ENCODE measurements at regions of chr1 and their contacts with region 1.

Region 1: GRCh38 chr1:99645699-99646531 is at the start of gene PALMD:
- DNase-seq: peak; percentile 81
- H3K4me3 ChIP-seq: peak within 1 kb of the TSS; percentile 47 to 62 (median 53)
- H3K27ac ChIP-seq: peak within 1 kb of the TSS; percentile 87
- H3K4me1 ChIP-seq: peaks cover 48% of the 10 kb centered on the region
- H3K27me3 ChIP-seq: no peaks in the 10 kb centered on the region
- CTCF ChIP-seq: no peak
- total RNA-seq, gene PALMD: 2.7 to 36.7 TPM

Region 2: GRCh38 chr1:99557546-99558202 is 88.2 kb before region 1 on chr1:
- CTCF ChIA-PET with region 1: no interaction called
- dilution Hi-C with region 1: no loop called
- in situ Hi-C with region 1: no loop called
- intact Hi-C with region 1: loop called (anchors 5 kb)
- DNase-seq: peak; percentile 81
- H3K4me3 ChIP-seq: no peak overlapping the region
- H3K27ac ChIP-seq: peak overlapping the region; percentile 49
- H3K4me1 ChIP-seq: peaks cover 24% of the 10 kb centered on the region
- H3K27me3 ChIP-seq: no peaks in the 10 kb centered on the region
- CTCF ChIP-seq: no peak

Region 3: DNA sequence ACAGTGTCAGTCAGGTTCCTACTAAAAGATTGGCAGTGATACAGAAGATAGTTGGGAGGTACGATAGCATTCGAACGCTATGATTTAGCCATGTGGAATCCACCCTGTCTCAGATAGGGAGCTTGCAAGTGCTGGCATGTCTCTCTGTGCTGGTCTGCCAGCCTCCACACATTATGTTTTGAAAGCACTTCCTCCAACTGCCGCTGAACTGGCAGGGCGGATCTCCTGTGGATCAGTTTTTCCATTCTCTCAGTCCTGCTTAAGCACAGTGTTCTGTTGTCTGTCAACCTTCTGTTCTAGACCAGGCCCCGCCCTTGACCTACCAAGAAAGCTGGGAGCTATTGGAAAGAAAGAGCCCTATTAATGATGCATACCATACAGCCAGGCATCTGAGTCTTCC is 65.5 kb before region 1 on chr1:
- CTCF ChIA-PET with region 1: no interaction called
- dilution Hi-C with region 1: no loop called
- in situ Hi-C with region 1: no loop called
- intact Hi-C with region 1: loop called (anchors 5 kb)
- DNase-seq: peak; percentile 97
- H3K4me3 ChIP-seq: no peak overlapping the region
- H3K27ac ChIP-seq: peak overlapping the region; percentile 84
- H3K4me1 ChIP-seq: peaks cover 20% of the 10 kb centered on the region
- H3K27me3 ChIP-seq: no peaks in the 10 kb centered on the region
- CTCF ChIP-seq: peak; percentile 31 to 44

Region 4: DNA sequence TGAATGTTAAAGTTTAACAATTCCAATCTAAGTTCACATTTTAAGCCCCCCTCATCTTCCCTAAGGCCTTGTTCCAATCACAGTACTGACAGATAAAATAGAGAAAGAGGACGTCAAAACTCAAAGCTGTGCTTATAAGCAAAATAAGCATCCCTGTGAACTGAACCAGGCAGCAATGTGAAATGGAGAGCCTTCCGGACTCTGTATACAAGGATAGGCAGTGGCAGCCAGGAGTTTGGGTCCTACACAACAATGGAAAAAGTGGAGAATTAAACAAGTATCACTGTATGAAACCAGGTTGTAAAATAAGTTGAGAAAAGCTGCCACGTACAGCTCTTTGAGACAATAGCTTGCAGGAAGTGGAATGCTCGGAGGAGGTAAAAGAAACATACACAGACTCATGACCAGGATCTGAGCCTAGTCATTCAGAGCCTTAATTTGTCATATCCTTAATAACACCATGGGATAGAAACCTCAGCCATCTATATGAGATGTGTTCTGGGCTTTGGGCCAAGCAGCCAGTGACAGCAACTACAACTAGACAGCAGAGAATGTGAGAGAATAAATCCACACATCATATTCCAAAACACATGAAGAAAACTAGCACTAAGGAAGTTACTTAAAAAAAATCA is 55.2 kb before region 1 on chr1:
- CTCF ChIA-PET with region 1: no interaction called
- dilution Hi-C with region 1: no loop called
- in situ Hi-C with region 1: no loop called
- intact Hi-C with region 1: no loop called
- DNase-seq: peak; percentile 91
- H3K4me3 ChIP-seq: no peak overlapping the region
- H3K27ac ChIP-seq: peak overlapping the region; percentile 55
- H3K4me1 ChIP-seq: peaks cover 14% of the 10 kb centered on the region
- H3K27me3 ChIP-seq: no peaks in the 10 kb centered on the region
- CTCF ChIP-seq: no peak

Region 5: GRCh38 chr1:99659755-99660210 is 13.9 kb after region 1 on chr1:
- CTCF ChIA-PET with region 1: no interaction called
- dilution Hi-C with region 1: no loop called
- in situ Hi-C with region 1: no loop called
- intact Hi-C with region 1: loop called (anchors 2 kb)
- DNase-seq: peak; percentile 98
- H3K4me3 ChIP-seq: no peak overlapping the region
- H3K27ac ChIP-seq: peak overlapping the region; percentile 95
- H3K4me1 ChIP-seq: peaks cover 37% of the 10 kb centered on the region
- H3K27me3 ChIP-seq: no peaks in the 10 kb centered on the region
- CTCF ChIP-seq: no peak

Region 6: GRCh38 chr1:99685516-99686180 is 39.7 kb after region 1 on chr1:
- CTCF ChIA-PET with region 1: interaction called, 6 read pairs
- dilution Hi-C with region 1: no loop called
- in situ Hi-C with region 1: no loop called
- intact Hi-C with region 1: loop called (anchors 2 kb)
- DNase-seq: peak; percentile 73
- H3K4me3 ChIP-seq: no peak overlapping the region
- H3K27ac ChIP-seq: no peak overlapping the region
- H3K4me1 ChIP-seq: peaks cover 6% of the 10 kb centered on the region
- H3K27me3 ChIP-seq: no peaks in the 10 kb centered on the region
- CTCF ChIP-seq: peak; percentile 66

Region 7: DNA sequence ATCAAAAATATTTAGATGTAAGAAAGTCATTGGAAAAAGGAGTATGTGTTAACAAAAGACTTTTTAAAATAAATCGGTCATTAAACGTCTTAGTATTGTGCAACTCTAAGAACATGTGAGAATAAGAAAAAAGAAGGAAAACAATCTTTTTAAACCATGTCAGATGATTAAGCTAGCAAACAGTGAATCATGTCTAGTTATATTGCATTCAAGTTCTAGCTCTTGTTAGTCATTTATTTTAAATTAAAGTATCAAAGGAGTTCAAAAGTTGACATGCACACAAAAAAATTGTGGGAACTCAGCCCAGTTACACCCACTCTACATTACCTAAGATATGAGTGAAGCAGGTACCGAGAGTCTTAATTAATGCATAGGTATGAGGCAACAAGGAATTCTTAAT is 110.7 kb after region 1 on chr1:
- CTCF ChIA-PET with region 1: interaction called, 12 read pairs
- dilution Hi-C with region 1: no loop called
- in situ Hi-C with region 1: no loop called
- intact Hi-C with region 1: no loop called
- DNase-seq: peak; percentile 88
- H3K4me3 ChIP-seq: peak overlapping the region in 1 of 3 experiments; percentile 31
- H3K27ac ChIP-seq: no peak overlapping the region
- H3K4me1 ChIP-seq: peaks cover 18% of the 10 kb centered on the region
- H3K27me3 ChIP-seq: no peaks in the 10 kb centered on the region
- CTCF ChIP-seq: no peak

Measured in mammary epithelial cell (primary cell).